Left cardiac atrium (tissue), 4 donors: ENCODE measurements at regions of chr18 and their contacts with region 1.

Region 1: GRCh38 chr18:47215554-47216138 is 35.8 kb downstream of the SKOR2 start:
- DNase-seq: no peak
- ATAC-seq: peak; percentile 54 to 67

Region 2: DNA sequence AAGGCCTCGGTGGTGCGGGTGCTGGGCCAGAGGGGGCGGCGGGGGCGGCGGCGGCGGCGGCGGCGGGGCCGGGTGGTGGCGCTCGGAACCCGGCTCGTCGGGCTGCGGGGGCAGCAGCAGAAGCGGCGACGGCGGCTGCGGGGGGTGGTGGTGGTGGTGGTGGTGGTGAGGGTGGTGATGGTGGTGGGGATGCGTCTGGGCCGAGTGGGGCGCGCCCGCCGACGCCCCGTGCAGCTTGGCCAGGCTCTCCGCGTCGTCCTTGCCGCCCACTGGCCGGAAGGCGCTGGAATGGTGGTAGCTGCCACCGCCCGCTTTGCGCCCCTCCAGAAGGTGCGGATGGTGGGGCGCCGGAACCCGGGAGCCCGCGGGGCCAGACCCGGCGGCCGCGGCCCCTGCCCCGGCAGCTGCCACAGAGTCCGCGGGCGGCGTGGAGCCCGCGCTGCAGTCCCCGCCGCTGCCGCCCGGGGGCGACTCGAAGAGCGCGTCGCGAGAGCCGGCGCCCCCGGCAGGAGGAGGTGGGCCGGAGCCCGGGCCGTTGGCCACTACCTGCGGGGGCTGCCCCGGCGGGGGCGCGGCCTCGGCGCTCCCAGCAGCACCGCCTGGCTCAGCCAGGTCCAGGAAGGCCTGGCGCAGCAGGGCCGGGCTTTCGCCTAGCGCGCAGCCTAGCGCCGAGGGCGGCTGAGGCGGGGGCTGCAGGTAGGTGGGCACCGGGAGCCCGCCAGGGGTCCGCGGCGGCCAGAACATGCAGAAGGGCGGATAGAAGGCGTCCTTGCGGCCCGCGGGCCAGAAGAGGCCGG is 31.6 kb after region 1 on chr18:
- intact Hi-C with region 1: no loop called
- DNase-seq: no peak
- ATAC-seq: peak in 1 of 2 donors; percentile 12

Region 3: DNA sequence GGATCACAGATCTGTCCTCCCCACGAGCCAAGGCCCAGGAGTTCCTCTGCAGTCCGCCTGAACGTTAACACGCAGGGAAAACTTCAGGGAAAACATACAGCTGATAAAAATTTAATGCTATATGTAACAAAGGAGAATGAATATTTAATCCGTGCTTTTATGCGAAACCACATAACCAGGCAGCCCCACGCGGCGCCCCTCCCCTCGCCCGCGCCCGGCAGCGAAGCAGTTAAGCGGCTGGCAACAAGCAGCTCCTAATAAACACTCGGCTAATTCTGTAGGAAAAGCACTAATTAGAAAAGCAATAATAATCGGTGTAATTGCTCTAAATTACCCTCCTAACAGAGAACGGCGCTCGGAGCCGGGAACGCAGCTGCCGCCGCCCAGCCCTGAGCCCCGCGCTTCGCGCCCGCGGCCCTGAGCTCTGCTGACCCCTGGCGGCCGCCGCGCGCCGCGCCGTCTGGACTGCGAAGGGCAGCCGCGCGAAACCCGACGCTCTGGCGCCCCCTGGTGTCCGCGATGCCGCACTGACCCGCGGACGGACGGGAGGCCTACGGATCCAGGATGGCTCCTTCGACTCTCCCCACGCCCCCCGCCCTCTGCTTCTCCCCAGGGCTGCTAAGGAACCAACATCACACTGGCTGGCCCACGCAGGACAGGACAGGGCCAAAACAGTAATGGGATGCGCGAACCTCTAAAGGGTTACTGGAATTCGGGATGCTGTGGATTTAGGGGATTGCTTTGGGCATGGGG is 533.4 kb after region 1 on chr18:
- intact Hi-C with region 1: loop called (anchors 1 to 5 kb)
- DNase-seq: peak; percentile 81
- ATAC-seq: peak; percentile 96 to 97